ENCODE measurements at regions of chr3 and their contacts with region 1.

Region 1: GRCh38 chr3:46895204-46895660 is 17.7 kb downstream of the PTH1R start:
- DNase-seq: peak; percentile 81
- H3K4me3 Mint-ChIP-seq: no peak overlapping the region
- H3K27ac Mint-ChIP-seq: no peak overlapping the region
- H3K4me1 Mint-ChIP-seq: peaks cover 26% of the 10 kb centered on the region
- H3K27me3 Mint-ChIP-seq: peaks cover 37% of the 10 kb centered on the region
- CTCF ChIP-seq: peak; percentile 89

Region 2: DNA sequence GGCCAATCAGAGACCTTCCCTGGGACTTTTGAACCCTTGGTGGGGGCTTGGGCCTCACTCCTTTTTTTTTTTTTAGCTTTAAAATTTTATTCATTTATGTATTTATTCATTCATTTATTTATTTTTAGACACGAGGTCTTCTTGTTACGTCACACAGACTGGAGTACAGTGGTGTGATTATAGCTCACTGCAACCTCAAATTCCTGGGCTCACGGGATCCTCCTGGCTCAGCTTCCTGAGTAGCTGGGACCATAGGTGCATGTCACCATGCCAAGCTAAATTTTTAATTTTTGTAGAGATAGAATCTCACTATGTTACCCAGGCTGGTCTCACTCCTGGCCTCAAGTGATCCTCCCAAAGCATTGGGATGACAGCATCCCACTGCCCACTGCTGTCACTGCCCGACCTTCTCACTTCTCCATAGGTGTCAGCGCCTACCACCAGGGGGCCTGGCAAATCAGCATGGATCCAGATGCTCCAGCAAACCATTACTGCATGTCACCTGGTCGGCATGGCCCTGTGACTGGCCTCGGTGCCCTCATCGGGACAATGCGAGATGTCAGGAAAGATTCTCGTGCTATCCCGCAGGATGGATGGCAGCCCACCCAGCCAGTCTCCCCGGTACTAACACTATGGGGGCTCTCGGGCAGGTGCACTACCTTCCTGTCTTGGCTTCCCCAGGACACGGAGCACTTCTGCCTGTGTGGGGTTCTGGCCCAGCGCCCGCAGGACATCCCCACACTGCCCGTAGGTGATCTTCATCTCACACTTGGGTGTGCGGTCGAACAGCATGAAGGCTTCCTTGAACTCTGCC is 35.0 kb before region 1 on chr3:
- CTCF ChIA-PET with region 1: interaction called, 3 read pairs
- intact Hi-C with region 1: loop called (anchors 5 kb)
- DNase-seq: peak; percentile 68
- H3K4me3 Mint-ChIP-seq: no peak overlapping the region
- H3K27ac Mint-ChIP-seq: no peak overlapping the region
- H3K4me1 Mint-ChIP-seq: no peaks in the 10 kb centered on the region
- H3K27me3 Mint-ChIP-seq: peaks cover 65% of the 10 kb centered on the region
- CTCF ChIP-seq: peak; percentile 54